ENCODE measurements at regions of chr2 and their contacts with region 1.

Region 1: DNA sequence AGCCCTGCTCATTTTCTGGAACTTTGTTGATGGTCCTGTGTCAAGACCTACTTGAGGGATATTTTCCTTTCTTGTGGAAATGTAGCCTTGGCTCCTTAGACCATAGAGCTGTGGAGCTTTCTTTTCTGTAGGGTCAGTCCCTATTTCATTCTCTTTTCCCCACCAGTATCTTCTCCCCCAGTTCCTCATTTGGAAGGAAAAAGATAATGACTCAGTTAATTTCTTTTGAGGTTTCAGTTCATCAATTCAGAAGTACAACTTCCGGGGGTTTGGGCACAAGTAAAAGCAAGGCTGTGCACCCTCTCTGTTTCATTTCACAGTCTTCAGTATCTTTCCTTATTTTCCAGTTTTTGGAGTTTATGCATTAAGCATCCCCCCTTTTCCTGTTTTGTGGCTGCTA is 70.7 kb downstream of the CDC42EP3 start:
- DNase-seq: peak in 1 of 5 donors; percentile 19
- H3K4me3 ChIP-seq: peak overlapping the region; percentile 54 to 80
- H3K4me3 Mint-ChIP-seq: peak overlapping the region; percentile 91 to 99 (median 96)
- H3K27ac ChIP-seq: peak overlapping the region; percentile 79
- H3K27ac Mint-ChIP-seq: peak overlapping the region; percentile 94 to 99 (median 99)
- H3K4me1 ChIP-seq: peaks cover 53% of the 10 kb centered on the region
- H3K4me1 Mint-ChIP-seq: peaks cover 37 to 61% (median 45%) of the 10 kb centered on the region in 4 donors
- H3K27me3 ChIP-seq: no peaks in the 10 kb centered on the region
- H3K27me3 Mint-ChIP-seq: no peaks in the 10 kb centered on the region

Region 2: DNA sequence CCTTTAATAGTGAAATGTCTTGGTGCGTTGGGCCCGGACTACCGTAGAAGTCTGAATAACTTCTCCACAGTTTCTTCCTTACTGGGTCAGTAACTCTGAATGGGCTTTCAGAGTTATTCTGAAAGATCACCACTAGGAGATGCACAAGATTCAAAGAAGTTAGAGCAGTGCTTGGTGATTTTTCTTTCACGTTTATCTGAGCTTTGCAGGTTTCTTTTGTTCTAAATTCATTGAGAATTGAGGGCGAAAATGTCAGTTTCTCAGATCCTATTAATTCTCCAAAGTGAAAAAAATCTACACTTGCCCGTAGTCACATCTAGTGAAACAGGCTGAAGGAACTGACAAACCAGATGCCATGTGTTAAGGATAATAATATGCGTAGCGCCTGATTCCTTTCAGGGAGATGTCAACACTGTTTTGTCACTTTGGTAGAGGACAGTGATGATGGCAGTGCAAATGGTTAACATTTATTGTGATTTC is 186.2 kb before region 1 on chr2:
- CTCF ChIA-PET with region 1: interaction called, 11 read pairs
- POLR2A ChIA-PET with region 1: interaction called, 13 read pairs
- intact Hi-C with region 1: no loop called
- DNase-seq: peak in 4 of 5 donors; percentile 53 to 57 (median 57)
- H3K4me3 ChIP-seq: no peak overlapping the region
- H3K4me3 Mint-ChIP-seq: peak overlapping the region in 1 of 8 donors; percentile 27
- H3K27ac ChIP-seq: no peak overlapping the region
- H3K27ac Mint-ChIP-seq: no peak overlapping the region
- H3K4me1 ChIP-seq: peaks cover 7% of the 10 kb centered on the region
- H3K4me1 Mint-ChIP-seq: peaks cover 6 to 19% (median 13%) of the 10 kb centered on the region in 4 donors
- H3K27me3 ChIP-seq: no peaks in the 10 kb centered on the region
- H3K27me3 Mint-ChIP-seq: peaks cover 2 to 4% of the 10 kb centered on the region in 2 donors

Region 3: DNA sequence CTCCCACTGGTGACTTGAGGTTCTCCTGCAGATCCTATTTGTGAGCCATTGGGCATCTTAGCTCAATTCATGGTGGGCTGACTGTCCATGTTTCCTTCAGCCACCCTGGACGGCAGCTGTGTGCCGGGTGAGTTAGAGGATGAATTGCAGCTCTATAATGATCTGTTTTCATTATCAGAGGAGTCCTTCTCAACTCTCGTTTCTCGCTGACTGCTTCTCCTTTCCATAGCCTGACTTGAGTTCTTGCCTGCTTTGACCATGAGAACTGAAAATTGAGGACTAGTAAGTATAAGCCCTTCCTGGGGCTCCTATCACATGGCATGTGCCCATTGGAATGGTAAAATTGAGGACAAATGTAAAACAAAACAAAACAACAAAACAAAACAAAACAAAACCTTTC is 51.1 kb before region 1 on chr2:
- CTCF ChIA-PET with region 1: interaction called, 6 read pairs
- POLR2A ChIA-PET with region 1: interaction called, 31 read pairs
- intact Hi-C with region 1: no loop called
- DNase-seq: no peak
- H3K4me3 ChIP-seq: no peak overlapping the region
- H3K4me3 Mint-ChIP-seq: no peak overlapping the region
- H3K27ac ChIP-seq: no peak overlapping the region
- H3K27ac Mint-ChIP-seq: no peak overlapping the region
- H3K4me1 ChIP-seq: peaks cover 12% of the 10 kb centered on the region
- H3K4me1 Mint-ChIP-seq: peaks cover 13 to 26% (median 16%) of the 10 kb centered on the region in 4 donors
- H3K27me3 ChIP-seq: no peaks in the 10 kb centered on the region
- H3K27me3 Mint-ChIP-seq: no peaks in the 10 kb centered on the region

Region 4: DNA sequence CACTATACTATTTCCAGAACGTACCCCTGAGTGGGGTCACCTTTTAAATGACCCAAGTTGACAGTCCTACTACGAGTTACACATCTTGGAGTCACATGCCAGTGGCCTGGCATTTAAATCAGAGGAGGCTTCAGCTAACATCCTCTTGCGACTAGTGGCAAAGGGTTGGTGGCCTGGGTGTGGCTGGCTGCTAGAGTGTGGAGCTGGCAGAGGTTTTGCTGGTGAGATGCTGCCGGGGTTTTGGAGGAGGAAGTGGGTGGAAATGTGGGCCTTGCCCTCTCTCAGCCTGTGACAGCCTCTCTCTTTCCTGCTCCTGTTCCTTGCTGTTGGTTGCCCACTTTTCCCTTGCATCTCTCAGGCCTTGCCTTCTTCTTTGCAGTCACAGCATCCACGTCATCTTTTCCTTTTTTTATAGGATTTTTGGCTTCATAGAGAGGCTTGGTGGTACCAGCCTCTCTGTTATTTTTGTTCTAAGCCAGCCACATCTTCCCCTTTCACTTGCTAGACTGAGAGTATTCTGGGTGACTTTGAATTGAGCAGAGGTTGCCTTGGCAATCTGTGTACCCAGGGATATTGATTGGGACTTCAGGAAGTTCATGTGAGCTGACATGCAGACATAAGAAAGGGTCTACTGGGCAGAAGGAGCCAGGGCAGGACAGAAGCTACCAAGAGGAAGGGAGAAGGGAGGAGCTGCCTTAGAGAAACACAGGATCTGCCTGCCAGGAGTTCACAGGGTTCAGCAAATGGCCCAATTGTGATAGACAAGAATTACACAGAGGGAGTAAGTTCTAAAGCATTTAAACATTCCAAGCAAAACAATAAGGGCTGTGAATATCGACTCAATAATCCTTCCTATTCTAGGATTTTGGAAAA is 15.3 kb after region 1 on chr2:
- CTCF ChIA-PET with region 1: interaction called, 44 read pairs
- POLR2A ChIA-PET with region 1: interaction called, 242 read pairs
- intact Hi-C with region 1: loop called (anchors 1 kb)
- DNase-seq: peak; percentile 73 to 81 (median 77)
- H3K4me3 ChIP-seq: no peak overlapping the region
- H3K4me3 Mint-ChIP-seq: peak overlapping the region in 7 of 8 donors; percentile 26 to 76 (median 74)
- H3K27ac ChIP-seq: peak overlapping the region; percentile 37
- H3K27ac Mint-ChIP-seq: peak overlapping the region; percentile 90 to 97 (median 96)
- H3K4me1 ChIP-seq: peaks cover 72% of the 10 kb centered on the region
- H3K4me1 Mint-ChIP-seq: peaks cover 53 to 80% (median 70%) of the 10 kb centered on the region in 4 donors
- H3K27me3 ChIP-seq: no peaks in the 10 kb centered on the region
- H3K27me3 Mint-ChIP-seq: no peaks in the 10 kb centered on the region

Region 5: GRCh38 chr2:37641582-37642171 is 40.9 kb after region 1 on chr2:
- CTCF ChIA-PET with region 1: interaction called, 34 read pairs
- POLR2A ChIA-PET with region 1: interaction called, 129 read pairs
- intact Hi-C with region 1: no loop called
- DNase-seq: no peak
- H3K4me3 ChIP-seq: no peak overlapping the region
- H3K4me3 Mint-ChIP-seq: peak overlapping the region in 1 of 8 donors; percentile 22
- H3K27ac ChIP-seq: no peak overlapping the region
- H3K27ac Mint-ChIP-seq: peak overlapping the region in 5 of 7 donors; percentile 0 to 89 (median 81)
- H3K4me1 ChIP-seq: peaks cover 82% of the 10 kb centered on the region
- H3K4me1 Mint-ChIP-seq: peaks cover 60 to 93% (median 79%) of the 10 kb centered on the region in 4 donors
- H3K27me3 ChIP-seq: no peaks in the 10 kb centered on the region
- H3K27me3 Mint-ChIP-seq: no peaks in the 10 kb centered on the region

Region 6: DNA sequence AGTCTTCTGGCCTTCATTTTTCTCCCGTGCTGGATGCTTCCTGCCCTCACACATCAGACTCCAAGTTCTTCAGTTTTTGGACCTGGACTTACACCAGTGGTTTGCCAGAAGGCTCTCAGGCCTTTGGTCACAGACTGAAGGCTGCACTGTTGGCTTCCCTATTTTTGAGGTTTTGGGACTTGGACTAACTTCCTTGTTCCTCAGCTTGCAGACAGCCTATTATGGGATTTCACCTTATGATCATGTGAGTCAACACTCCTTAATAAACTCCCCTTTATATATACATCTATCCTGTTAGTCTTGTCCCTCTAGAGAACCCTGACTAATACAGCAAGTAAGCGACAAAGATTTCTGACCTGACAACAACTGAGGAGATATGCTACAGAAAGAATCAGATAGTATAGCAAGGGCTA is 63.5 kb after region 1 on chr2:
- CTCF ChIA-PET with region 1: interaction called, 3 read pairs
- POLR2A ChIA-PET with region 1: interaction called, 116 read pairs
- intact Hi-C with region 1: no loop called
- DNase-seq: no peak
- H3K4me3 ChIP-seq: no peak overlapping the region
- H3K4me3 Mint-ChIP-seq: peak overlapping the region in 6 of 8 donors; percentile 11 to 57 (median 28)
- H3K27ac ChIP-seq: no peak overlapping the region
- H3K27ac Mint-ChIP-seq: peak overlapping the region; percentile 20 to 96 (median 78)
- H3K4me1 ChIP-seq: peaks cover 98% of the 10 kb centered on the region
- H3K4me1 Mint-ChIP-seq: peaks cover 75 to 99% (median 87%) of the 10 kb centered on the region in 4 donors
- H3K27me3 ChIP-seq: no peaks in the 10 kb centered on the region
- H3K27me3 Mint-ChIP-seq: no peaks in the 10 kb centered on the region

Region 7: GRCh38 chr2:37832590-37833197 is 232.0 kb after region 1 on chr2:
- CTCF ChIA-PET with region 1: interaction called, 17 read pairs
- POLR2A ChIA-PET with region 1: interaction called, 10 read pairs
- intact Hi-C with region 1: no loop called
- DNase-seq: peak; percentile 69 to 75 (median 74)
- H3K4me3 ChIP-seq: no peak overlapping the region
- H3K4me3 Mint-ChIP-seq: no peak overlapping the region
- H3K27ac ChIP-seq: no peak overlapping the region
- H3K27ac Mint-ChIP-seq: peak overlapping the region in 2 of 7 donors; percentile 16 to 48
- H3K4me1 ChIP-seq: peaks cover 16% of the 10 kb centered on the region
- H3K4me1 Mint-ChIP-seq: peaks cover 5 to 26% (median 11%) of the 10 kb centered on the region in 4 donors
- H3K27me3 ChIP-seq: no peaks in the 10 kb centered on the region
- H3K27me3 Mint-ChIP-seq: no peaks in the 10 kb centered on the region

Measured in CD4-positive, alpha-beta memory T cell (primary cell).